Dorsolateral prefrontal cortex (tissue), 120 donors: ENCODE measurements at regions of chr14 and their contacts with region 1.

Region 1: GRCh38 chr14:39174560-39175444 is at the start of gene PNN:
- DNase-seq: peak; percentile 94 to 98 (median 97)
- H3K4me3 ChIP-seq: peak within 1 kb of the TSS; percentile 60 to 99 (median 92)
- H3K27ac ChIP-seq: peak within 1 kb of the TSS; percentile 69 to 99 (median 95)
- H3K27me3 ChIP-seq: no peaks in the 10 kb centered on the region
- CTCF ChIP-seq: peak in 19 of 56 donors; percentile 3 to 45 (median 19)
- total RNA-seq, gene PNN: 40.4 to 84.6 (median 55.2) TPM

Region 2: DNA sequence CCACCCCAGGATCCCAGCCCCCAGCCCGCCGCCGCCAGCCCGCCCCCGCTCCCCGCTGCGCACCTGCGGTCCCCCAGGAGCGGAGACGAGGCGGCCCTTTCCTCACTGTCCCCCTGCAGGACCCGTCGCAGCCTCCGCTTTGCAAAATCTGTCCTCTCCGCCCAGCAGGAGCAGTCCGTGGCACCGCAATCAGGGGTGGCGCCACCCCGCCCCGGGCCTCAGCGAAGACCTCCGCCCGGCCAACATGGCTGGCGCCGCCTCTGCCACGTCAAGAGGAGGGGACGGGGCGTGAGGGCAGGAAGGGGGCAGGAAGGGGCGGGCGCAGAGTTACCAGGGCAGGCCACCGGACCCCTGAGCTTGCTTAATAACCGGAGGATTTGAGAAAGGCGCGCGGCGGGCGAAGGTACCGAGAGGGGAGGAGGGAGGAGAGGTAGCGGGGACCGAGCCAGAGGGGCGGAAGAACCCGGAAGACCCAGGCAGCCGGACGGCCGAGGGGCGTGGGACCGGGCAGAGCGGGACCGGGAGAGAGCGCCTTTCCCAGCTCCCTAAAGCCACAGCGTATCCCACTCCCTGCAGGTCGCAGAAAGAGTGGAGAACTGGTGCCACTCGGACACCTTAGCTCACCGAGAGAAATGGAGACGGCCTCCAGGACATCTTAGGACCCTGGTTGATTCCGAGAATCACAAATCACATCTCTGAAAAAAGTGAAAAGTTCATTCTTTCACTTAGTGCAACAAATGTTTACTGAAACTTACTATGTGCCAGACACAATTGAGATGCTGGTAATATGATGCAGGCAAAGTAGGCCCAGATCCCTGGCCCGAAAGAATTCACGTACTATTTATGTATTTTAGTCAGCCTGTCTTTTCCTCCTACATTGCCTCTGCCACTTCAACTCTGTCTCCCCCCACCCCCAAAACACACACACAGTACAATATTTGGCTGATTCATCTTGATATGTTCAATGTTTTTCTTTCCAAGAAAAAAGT is 71.5 kb before region 1 on chr14 and contains the start of gene SEC23A:
- intact Hi-C with region 1: loop called (anchors 5 kb)
- DNase-seq: peak; percentile 63 to 90 (median 78)
- H3K4me3 ChIP-seq: peak within 1 kb of the TSS; percentile 62 to 98 (median 91)
- H3K27ac ChIP-seq: peak within 1 kb of the TSS; percentile 49 to 99 (median 96)
- H3K27me3 ChIP-seq: no peaks in the 10 kb centered on the region
- CTCF ChIP-seq: peak in 24 of 56 donors; percentile 3 to 39 (median 21)
- total RNA-seq, gene SEC23A: 47.9 to 106 (median 76.3) TPM

Region 3: GRCh38 chr14:39114073-39114838 is 60.5 kb before region 1 on chr14 and contains the start of gene GEMIN2:
- intact Hi-C with region 1: loop called (anchors 2 to 5 kb)
- DNase-seq: peak; percentile 87 to 96 (median 94)
- H3K4me3 ChIP-seq: peak within 1 kb of the TSS; percentile 60 to 98 (median 82)
- H3K27ac ChIP-seq: peak within 1 kb of the TSS; percentile 7 to 95 (median 81)
- H3K27me3 ChIP-seq: no peaks in the 10 kb centered on the region
- CTCF ChIP-seq: peak in 22 of 56 donors; percentile 3 to 49 (median 24)
- total RNA-seq, gene GEMIN2: 7.4 to 23.1 (median 14.5) TPM

Region 4: GRCh38 chr14:39266871-39267591 is 92.2 kb after region 1 on chr14:
- intact Hi-C with region 1: loop called (anchors 1 to 2 kb)
- DNase-seq: peak; percentile 50 to 86 (median 78)
- H3K4me3 ChIP-seq: peak overlapping the region; percentile 58 to 98 (median 91)
- H3K27ac ChIP-seq: peak overlapping the region; percentile 80 to 100 (median 97)
- H3K27me3 ChIP-seq: no peaks in the 10 kb centered on the region
- CTCF ChIP-seq: peak in 8 of 56 donors; percentile 2 to 31 (median 14)

Region 5: DNA sequence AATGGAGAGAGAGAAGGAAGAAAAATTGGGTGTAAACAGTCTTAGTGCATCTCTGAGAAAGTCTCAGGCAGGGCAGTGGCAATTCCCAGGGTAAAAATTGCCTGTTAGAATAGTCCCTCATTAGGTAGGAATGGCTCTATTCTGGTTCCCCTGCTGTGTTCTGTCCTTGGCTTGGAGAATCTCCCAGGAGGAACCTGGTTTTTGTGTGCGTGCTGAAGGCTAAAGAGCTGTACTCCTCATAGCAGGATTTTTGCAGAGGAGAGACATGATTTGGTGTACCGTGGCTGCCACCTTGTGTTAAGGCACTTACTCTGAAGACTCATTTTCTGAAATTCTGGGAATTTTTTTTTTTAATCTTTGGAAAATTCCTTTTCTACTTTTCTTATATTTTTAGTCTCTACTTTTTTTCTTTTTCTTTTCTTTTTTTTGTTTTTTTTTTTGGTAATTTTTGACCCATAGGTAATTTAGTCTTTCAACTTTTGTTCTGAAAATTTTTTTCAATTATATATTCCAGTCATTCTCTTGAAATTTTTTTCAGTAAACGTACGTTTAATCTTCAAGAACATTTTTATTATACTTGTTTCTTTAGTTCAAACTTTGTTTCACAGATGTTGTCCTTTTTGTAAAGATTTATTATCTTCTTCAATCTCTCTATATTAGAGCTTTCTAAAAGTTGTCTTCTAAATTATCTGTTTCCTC is 193.6 kb after region 1 on chr14:
- intact Hi-C with region 1: loop called in 1 of 2 experiments (anchors 10 kb)
- DNase-seq: peak in 6 of 10 donors; percentile 26 to 77 (median 54)
- H3K4me3 ChIP-seq: no peak overlapping the region
- H3K27ac ChIP-seq: peak overlapping the region in 4 of 59 donors; percentile 8 to 62 (median 16)
- H3K27me3 ChIP-seq: no peaks in the 10 kb centered on the region
- CTCF ChIP-seq: peak in 54 of 56 donors; percentile 19 to 76 (median 58)

Region 6: DNA sequence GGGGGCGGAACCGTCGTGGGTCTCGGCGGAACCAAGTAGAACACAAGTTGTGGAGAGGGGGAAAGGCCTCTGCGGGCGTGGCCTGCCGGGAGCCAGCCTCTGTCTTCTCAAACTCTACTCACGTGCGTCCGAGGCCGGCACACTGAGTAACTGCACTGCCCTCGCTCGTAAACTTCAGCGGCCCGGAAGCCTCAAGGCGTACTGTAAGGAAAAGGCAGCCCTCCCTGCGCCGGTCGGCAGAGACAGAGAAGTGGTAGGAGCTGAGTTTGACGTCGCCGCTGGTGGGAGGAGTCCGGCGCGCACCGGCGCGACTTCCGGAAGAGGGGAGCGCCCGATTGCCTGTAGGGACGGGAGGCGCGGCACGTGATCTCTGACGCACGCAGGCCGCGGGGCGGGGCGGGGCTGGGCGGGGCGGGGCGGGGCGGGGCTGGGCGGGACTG is 257.4 kb after region 1 on chr14 and contains the start of gene FBXO33:
- intact Hi-C with region 1: loop called (anchors 1 to 2 kb)
- DNase-seq: peak; percentile 94 to 98 (median 96)
- H3K4me3 ChIP-seq: peak within 1 kb of the TSS; percentile 73 to 100 (median 93)
- H3K27ac ChIP-seq: peak within 1 kb of the TSS; percentile 83 to 99 (median 98)
- H3K27me3 ChIP-seq: no peaks in the 10 kb centered on the region
- CTCF ChIP-seq: peak in 5 of 56 donors; percentile 1 to 10 (median 5)
- total RNA-seq, gene FBXO33: 13.8 to 42.2 (median 27.4) TPM